Common myeloid progenitor, CD34-positive (primary cell): ENCODE measurements at regions of chr3 and their contacts with region 1.

Region 1: DNA sequence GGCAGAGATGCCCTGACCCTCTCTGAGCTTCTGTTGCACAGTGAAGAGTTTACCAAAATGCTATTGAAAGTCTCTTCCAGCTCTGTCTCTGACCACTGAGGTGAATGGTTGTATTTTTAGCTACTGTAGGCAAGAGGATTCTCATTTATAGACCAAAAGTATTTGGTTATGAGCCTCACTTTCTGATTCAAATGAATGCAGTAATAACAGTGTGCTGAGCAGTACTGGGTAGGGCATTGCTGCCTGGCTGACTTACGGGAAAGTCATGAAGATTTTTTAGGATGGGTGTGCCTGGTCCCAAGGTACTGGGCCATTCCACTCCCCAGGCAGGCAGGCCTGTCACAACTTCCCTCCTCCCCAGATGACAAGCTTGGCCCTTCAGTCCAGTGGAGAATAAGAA is 15.5 kb downstream of the PLA1A start:
- DNase-seq: no peak
- H3K4me3 ChIP-seq: no peak overlapping the region
- H3K27ac ChIP-seq: no peak overlapping the region
- H3K4me1 ChIP-seq: no peaks in the 10 kb centered on the region
- H3K27me3 ChIP-seq: peaks cover 0 to 4% (median 0%) of the 10 kb centered on the region in 5 experiments

Region 2: DNA sequence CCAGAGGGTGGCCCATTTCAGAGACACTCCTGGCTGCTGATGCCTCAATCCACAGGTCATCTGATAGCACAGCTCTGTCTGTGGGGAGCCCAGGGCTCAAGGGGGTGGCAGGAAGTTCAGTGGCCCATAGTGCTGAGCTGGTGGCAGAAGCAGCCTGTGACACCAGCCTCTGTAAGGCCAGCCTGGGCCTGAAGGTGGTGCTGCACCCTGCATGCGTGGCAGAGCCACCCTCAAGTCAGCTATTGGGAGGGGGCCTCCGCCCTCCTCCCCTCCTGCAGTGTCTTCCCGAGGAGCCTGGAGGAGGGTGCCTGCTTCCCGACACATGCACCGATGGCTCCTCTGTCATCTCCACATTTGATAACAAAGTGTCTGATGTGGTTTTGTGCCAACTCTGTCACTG is 12.5 kb before region 1 on chr3:
- CTCF ChIA-PET with region 1: interaction called, 19 read pairs
- POLR2A ChIA-PET with region 1: no interaction called
- DNase-seq: peak; percentile 17 to 51 (median 50)
- H3K4me3 ChIP-seq: no peak overlapping the region
- H3K27ac ChIP-seq: no peak overlapping the region
- H3K4me1 ChIP-seq: peaks cover 0 to 17% (median 9%) of the 10 kb centered on the region in 4 experiments
- H3K27me3 ChIP-seq: no peaks in the 10 kb centered on the region

Region 3: GRCh38 chr3:119624002-119624720 is 11.0 kb after region 1 on chr3:
- CTCF ChIA-PET with region 1: no interaction called
- POLR2A ChIA-PET with region 1: no interaction called
- DNase-seq: no peak
- H3K4me3 ChIP-seq: no peak overlapping the region
- H3K27ac ChIP-seq: no peak overlapping the region
- H3K4me1 ChIP-seq: peaks cover 0 to 30% (median 14%) of the 10 kb centered on the region in 4 experiments
- H3K27me3 ChIP-seq: no peaks in the 10 kb centered on the region

Region 4: GRCh38 chr3:119741657-119742590 is 128.7 kb after region 1 on chr3:
- CTCF ChIA-PET with region 1: no interaction called
- POLR2A ChIA-PET with region 1: no interaction called
- DNase-seq: peak in 1 of 3 donors; percentile 6
- H3K4me3 ChIP-seq: no peak overlapping the region
- H3K27ac ChIP-seq: no peak overlapping the region
- H3K4me1 ChIP-seq: peaks cover 0 to 9% (median 0%) of the 10 kb centered on the region in 4 experiments
- H3K27me3 ChIP-seq: no peaks in the 10 kb centered on the region